HCT116 (cell line): ENCODE measurements at regions of chr2 and their contacts with region 1.

Region 1: DNA sequence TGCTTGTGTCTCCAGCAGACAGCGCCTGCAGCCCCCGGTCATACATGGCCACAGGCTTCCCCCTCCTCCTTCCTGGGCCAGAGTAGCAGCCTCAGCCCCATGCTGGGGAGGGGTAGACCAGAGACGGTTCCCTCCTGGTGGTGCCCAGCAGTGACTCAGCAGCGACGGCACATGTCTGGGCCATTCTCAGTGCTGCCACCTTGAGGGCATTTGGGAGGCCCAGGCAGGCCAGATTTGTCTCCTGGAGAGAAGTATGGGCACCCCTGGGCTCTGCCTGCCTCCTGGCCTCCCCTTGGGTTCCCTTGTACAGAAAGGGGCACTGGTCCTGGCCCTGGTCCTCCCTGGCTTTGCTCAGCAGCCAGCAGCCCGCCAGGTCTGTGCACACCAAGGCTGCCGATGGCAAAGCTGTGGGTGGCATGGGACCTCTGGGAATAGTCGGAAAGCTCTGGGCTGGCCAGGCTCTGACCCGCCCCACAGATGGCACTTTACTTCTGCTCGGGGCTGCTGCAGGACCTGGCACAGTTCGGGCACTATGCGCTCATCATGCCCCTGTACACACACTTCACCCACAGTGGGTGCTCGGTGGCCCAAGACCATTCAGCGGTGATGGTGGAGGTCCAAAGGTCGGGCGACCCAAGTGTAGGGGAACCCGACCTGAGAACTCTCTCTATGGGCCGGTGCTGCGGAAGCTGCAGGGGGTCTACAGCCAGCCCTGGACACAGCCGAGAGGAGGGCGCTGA is 11.4 kb upstream of the ALPI start:
- DNase-seq: peak; percentile 56
- ATAC-seq: peak; percentile 76
- H3K4me3 ChIP-seq: no peak overlapping the region
- H3K27ac ChIP-seq: peak overlapping the region; percentile 25; the same call in 1 of the 2 replicates
- H3K4me1 ChIP-seq: peaks cover 0 to 13% of the 10 kb centered on the region in 2 experiments; a peak in 2 of 4 replicates
- H3K27me3 ChIP-seq: no peaks in the 10 kb centered on the region
- CTCF ChIP-seq: peak; percentile 59 to 93 (median 79); a peak in 5 of 6 replicates
- POLR2A ChIP-seq: no peak
- RAD21 ChIP-seq: peak; percentile 20; the same call in 1 of the 2 replicates

Region 2: DNA sequence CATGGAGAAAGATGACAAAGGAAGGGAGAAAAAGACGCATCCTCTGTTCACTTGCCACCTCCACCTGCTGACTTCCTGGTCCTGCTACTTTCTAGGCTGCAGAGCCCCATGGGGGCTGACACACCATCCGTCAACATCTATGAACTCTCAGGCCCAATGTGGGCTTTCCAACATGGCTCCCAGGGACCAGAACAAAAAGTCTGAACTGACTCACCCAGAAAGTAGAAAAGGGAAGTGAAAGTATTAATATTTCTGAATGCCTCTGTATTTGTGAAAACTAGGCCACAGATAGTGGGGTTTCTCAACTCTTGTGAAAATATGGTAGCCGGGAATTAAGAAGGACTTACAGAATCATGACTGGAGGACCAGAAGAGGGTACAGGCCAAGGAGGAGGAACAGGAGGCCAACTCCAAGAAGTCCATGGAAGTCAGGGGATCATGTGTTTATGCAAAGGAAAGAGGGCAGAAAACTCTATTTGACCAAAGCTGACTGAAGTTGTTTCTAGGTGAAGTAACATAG is 1855.0 kb before region 1 on chr2:
- CTCF ChIA-PET with region 1: no interaction called
- POLR2A ChIA-PET with region 1: no interaction called
- RAD21 ChIA-PET with region 1: no interaction called
- intact Hi-C with region 1: no loop called
- DNase-seq: no peak
- ATAC-seq: no peak
- H3K4me3 ChIP-seq: no peak overlapping the region
- H3K27ac ChIP-seq: no peak overlapping the region
- H3K4me1 ChIP-seq: no peaks in the 10 kb centered on the region
- H3K27me3 ChIP-seq: no peaks in the 10 kb centered on the region
- CTCF ChIP-seq: no peak
- POLR2A ChIP-seq: no peak
- RAD21 ChIP-seq: no peak

Region 3: GRCh38 chr2:232327105-232328041 is 117.2 kb before region 1 on chr2:
- CTCF ChIA-PET with region 1: no interaction called
- POLR2A ChIA-PET with region 1: no interaction called
- RAD21 ChIA-PET with region 1: no interaction called
- intact Hi-C with region 1: loop called (anchors 5 kb)
- DNase-seq: peak; percentile 27
- ATAC-seq: peak; percentile 84
- H3K4me3 ChIP-seq: no peak overlapping the region
- H3K27ac ChIP-seq: no peak overlapping the region
- H3K4me1 ChIP-seq: no peaks in the 10 kb centered on the region
- H3K27me3 ChIP-seq: no peaks in the 10 kb centered on the region
- CTCF ChIP-seq: peak; percentile 75 to 85 (median 77)
- POLR2A ChIP-seq: no peak
- RAD21 ChIP-seq: peak; percentile 74

Region 4: DNA sequence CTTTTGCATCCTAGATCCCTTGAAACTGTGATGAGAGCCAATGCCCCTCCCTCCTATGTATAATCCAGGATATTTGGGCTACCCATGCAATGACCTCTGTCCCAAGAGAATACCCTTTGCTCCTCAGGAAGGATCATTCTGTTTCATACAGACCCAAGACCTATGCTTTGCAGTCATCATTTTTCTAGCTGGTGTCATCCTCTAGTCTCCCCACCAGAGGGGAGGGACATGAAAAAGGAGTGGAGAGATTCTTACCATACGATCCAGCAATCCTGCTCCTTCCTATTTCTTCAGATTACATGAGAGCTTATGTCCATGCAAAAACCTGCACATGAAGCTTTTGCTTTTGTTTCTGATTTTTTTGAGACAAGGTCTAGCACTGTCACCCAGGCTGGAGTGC is 238.8 kb after region 1 on chr2:
- CTCF ChIA-PET with region 1: no interaction called
- POLR2A ChIA-PET with region 1: no interaction called
- RAD21 ChIA-PET with region 1: no interaction called
- intact Hi-C with region 1: no loop called
- DNase-seq: no peak
- ATAC-seq: no peak
- H3K4me3 ChIP-seq: no peak overlapping the region
- H3K27ac ChIP-seq: no peak overlapping the region
- H3K4me1 ChIP-seq: no peaks in the 10 kb centered on the region
- H3K27me3 ChIP-seq: no peaks in the 10 kb centered on the region
- CTCF ChIP-seq: no peak
- POLR2A ChIP-seq: no peak
- RAD21 ChIP-seq: no peak